Activated CD4-positive, alpha-beta T cell treated with anti-CD3 and anti-CD28 coated beads for 36 hours (primary cell): ENCODE measurements at regions of chr11 and their contacts with region 1.

Region 1: GRCh38 chr11:28058333-28058732 is 49.6 kb downstream of the KIF18A start:
- DNase-seq: no peak
- ATAC-seq: no peak
- H3K4me3 Mint-ChIP-seq: no peak overlapping the region
- H3K27ac Mint-ChIP-seq: no peak overlapping the region
- H3K4me1 Mint-ChIP-seq: no peaks in the 10 kb centered on the region
- H3K27me3 Mint-ChIP-seq: no peaks in the 10 kb centered on the region

Region 2: DNA sequence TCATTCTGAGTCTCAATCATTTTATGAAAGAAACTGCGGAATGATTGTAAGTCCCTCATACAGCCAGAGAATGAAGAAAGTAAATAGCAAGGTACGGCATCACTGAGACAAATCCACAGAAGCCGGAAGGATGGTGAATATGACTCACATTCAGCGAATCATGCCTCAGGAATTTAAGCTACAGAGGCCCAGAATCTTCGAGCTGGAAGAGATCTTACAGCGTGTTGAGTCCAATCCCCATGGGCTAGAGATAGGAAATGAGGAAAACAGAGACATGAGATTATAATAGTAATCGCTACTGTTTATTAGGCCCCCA is 123.5 kb before region 1 on chr11:
- CTCF ChIA-PET with region 1: no interaction called
- POLR2A ChIA-PET with region 1: no interaction called
- intact Hi-C with region 1: no loop called
- DNase-seq: no peak
- ATAC-seq: no peak
- H3K4me3 Mint-ChIP-seq: no peak overlapping the region
- H3K27ac Mint-ChIP-seq: no peak overlapping the region
- H3K4me1 Mint-ChIP-seq: no peaks in the 10 kb centered on the region
- H3K27me3 Mint-ChIP-seq: peaks cover 2% of the 10 kb centered on the region

Region 3: GRCh38 chr11:28009996-28010395 is 48.3 kb before region 1 on chr11:
- CTCF ChIA-PET with region 1: no interaction called
- POLR2A ChIA-PET with region 1: no interaction called
- intact Hi-C with region 1: loop called in 1 of 2 experiments (anchors 5 kb)
- DNase-seq: no peak
- ATAC-seq: no peak
- H3K4me3 Mint-ChIP-seq: no peak overlapping the region
- H3K27ac Mint-ChIP-seq: no peak overlapping the region
- H3K4me1 Mint-ChIP-seq: no peaks in the 10 kb centered on the region
- H3K27me3 Mint-ChIP-seq: no peaks in the 10 kb centered on the region

Region 4: DNA sequence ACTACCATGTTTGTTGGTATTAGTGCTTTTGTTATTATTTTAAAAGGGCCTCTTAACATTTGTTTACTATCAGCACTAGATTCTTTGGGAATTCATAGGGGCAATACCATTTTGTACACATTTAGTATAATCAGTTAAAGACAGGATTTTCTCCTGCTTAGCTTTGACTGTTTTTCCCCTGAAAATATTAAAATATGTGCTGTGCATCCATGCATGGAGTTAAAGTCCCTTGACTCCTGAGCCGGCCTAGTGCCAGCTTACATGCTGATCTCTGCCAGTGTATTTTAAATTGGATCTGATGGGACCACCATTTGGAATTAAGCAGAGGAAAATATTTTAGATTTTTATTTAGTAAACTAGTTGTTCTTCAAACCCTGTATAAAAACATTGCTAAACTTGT is 211.3 kb after region 1 on chr11:
- CTCF ChIA-PET with region 1: no interaction called
- POLR2A ChIA-PET with region 1: no interaction called
- intact Hi-C with region 1: no loop called
- DNase-seq: no peak
- ATAC-seq: no peak
- H3K4me3 Mint-ChIP-seq: no peak overlapping the region
- H3K27ac Mint-ChIP-seq: no peak overlapping the region
- H3K4me1 Mint-ChIP-seq: no peaks in the 10 kb centered on the region
- H3K27me3 Mint-ChIP-seq: no peaks in the 10 kb centered on the region